Aorta (tissue), 5 donors: ENCODE measurements at regions of chr2 and their contacts with region 1.

Region 1: GRCh38 chr2:41966431-41966893 is 81.4 kb upstream of the PKDCC start:
- DNase-seq: peak; percentile 97 to 98
- ATAC-seq: peak; percentile 90
- H3K4me3 ChIP-seq: no peak overlapping the region
- H3K27ac ChIP-seq: peak overlapping the region; percentile 89 to 93
- H3K4me1 ChIP-seq: peaks cover 13 to 16% of the 10 kb centered on the region in 2 donors
- H3K27me3 ChIP-seq: no peaks in the 10 kb centered on the region

Region 2: GRCh38 chr2:41241325-41242000 is 725.0 kb before region 1 on chr2:
- intact Hi-C with region 1: no loop called
- DNase-seq: no peak
- ATAC-seq: no peak
- H3K4me3 ChIP-seq: no peak overlapping the region
- H3K27ac ChIP-seq: no peak overlapping the region
- H3K4me1 ChIP-seq: no peaks in the 10 kb centered on the region
- H3K27me3 ChIP-seq: no peaks in the 10 kb centered on the region

Region 3: DNA sequence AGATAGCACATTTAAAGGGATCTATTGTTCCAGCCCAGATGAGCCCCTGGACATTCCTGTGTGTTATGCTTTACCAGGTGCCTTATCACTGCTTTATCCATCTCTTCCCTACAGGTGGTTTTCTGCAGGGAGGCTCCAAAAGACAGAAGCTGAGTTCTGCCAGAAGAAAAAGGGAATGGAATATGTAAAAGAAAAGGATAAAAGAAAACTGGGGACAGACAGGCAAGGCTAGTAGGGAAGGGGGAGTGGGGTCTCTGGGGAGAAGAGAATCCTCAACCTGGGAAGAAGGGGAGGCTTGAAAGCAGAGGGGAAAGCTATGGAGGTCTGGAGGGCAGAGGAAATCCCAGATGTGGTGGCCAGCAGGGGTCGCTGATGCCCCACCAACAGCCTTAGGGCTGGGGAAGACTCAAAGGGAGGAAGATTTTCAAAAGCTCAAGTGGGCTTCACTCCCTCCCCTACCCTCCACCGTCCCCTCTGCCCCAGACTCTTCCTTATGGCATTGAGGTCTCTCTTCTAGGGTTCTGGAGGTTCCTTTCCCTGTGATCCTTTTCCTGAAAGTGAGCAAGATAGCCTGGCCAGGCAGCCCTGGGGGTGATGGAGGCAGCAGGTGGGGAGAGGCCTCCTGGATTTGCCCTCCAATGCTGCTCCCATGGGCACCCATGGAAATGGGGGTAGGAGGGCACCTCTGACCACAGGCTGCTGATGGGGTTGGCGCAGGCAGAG is 96.8 kb before region 1 on chr2:
- intact Hi-C with region 1: loop called in 1 of 2 experiments (anchors 5 kb)
- DNase-seq: peak; percentile 79 to 95
- ATAC-seq: peak; percentile 89
- H3K4me3 ChIP-seq: no peak overlapping the region
- H3K27ac ChIP-seq: no peak overlapping the region
- H3K4me1 ChIP-seq: no peaks in the 10 kb centered on the region
- H3K27me3 ChIP-seq: no peaks in the 10 kb centered on the region

Region 4: DNA sequence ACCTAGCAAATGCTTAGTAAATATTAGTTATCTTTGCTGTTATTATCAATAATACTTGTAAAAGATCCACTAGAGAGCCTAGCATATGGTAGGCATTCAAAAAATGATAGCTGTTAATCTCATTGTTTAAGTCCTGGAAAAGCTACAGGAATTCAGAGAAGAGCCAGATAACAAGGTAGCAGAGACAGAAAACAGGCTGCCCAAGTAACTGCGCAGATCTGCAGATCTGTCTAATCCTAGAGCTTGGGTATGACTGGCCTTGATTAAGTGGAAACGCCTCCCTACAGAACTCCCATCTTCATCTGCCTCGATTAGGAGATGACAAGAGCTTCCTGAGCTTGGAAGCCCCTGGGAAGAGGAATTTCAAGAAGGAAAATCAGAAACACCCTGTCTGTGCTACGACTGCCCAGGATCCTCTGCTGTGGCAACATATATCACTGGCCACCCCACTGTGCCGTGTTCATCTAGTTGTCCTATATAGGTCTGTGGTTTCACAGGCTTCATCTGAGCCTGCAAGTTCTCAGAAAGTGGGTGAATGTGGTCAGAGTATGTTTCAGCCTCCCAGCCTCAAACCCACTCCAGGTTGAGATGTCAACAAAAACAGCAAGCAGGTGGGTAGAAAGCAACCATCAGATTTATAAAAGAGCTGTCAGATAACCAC is 70.1 kb before region 1 on chr2:
- intact Hi-C with region 1: loop called (anchors 2 to 10 kb)
- DNase-seq: no peak
- ATAC-seq: no peak
- H3K4me3 ChIP-seq: no peak overlapping the region
- H3K27ac ChIP-seq: peak overlapping the region in 1 of 2 donors; percentile 42
- H3K4me1 ChIP-seq: peaks cover 5 to 9% of the 10 kb centered on the region in 2 donors
- H3K27me3 ChIP-seq: no peaks in the 10 kb centered on the region

Region 5: DNA sequence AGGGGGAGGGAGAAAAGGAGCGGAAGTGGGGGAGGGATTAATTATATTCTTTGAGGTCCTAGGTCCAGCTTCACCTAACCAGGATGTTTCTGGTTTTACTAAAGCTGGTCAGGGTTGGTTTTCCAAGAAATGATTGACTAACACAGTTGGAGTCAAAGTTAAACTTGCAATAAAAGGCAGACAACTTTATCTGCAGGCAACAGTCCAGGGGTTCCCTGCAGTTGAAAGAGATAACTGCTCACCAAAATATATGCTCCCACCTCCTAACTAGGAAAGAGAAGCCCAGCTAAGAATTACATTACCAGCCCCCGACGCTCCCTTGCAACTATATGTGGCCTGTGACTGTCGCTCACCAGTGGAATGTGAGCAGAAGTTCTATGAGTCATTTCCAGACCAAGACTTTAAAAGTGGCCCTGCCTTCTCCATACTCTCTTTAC is 58.7 kb before region 1 on chr2:
- intact Hi-C with region 1: loop called in 1 of 2 experiments (anchors 10 kb)
- DNase-seq: no peak
- ATAC-seq: no peak
- H3K4me3 ChIP-seq: no peak overlapping the region
- H3K27ac ChIP-seq: no peak overlapping the region
- H3K4me1 ChIP-seq: no peaks in the 10 kb centered on the region
- H3K27me3 ChIP-seq: no peaks in the 10 kb centered on the region

Region 6: GRCh38 chr2:42047488-42048298 is 81.2 kb after region 1 on chr2 and contains the start of gene PKDCC:
- intact Hi-C with region 1: loop called in 1 of 2 experiments (anchors 1 kb)
- DNase-seq: peak; percentile 91 to 95
- ATAC-seq: peak; percentile 86
- H3K4me3 ChIP-seq: peak within 1 kb of the TSS; percentile 80 to 96
- H3K27ac ChIP-seq: peak within 1 kb of the TSS; percentile 90 to 99
- H3K4me1 ChIP-seq: peaks cover 0 to 2% of the 10 kb centered on the region in 2 donors
- H3K27me3 ChIP-seq: no peaks in the 10 kb centered on the region
- total RNA-seq, gene PKDCC: 148 to 258 TPM

Region 7: GRCh38 chr2:42060718-42061619 is 94.5 kb after region 1 on chr2:
- intact Hi-C with region 1: loop called in 1 of 2 experiments (anchors 5 kb)
- DNase-seq: peak; percentile 83 to 84
- ATAC-seq: peak; percentile 71
- H3K4me3 ChIP-seq: no peak overlapping the region
- H3K27ac ChIP-seq: peak overlapping the region; percentile 79 to 87
- H3K4me1 ChIP-seq: peaks cover 3 to 8% of the 10 kb centered on the region in 2 donors
- H3K27me3 ChIP-seq: no peaks in the 10 kb centered on the region